Activated CD4-positive, alpha-beta memory T cell treated with anti-CD3 and anti-CD28 coated beads for 36 hours (primary cell): ENCODE measurements at regions of chr17 and their contacts with region 1.

Region 1: DNA sequence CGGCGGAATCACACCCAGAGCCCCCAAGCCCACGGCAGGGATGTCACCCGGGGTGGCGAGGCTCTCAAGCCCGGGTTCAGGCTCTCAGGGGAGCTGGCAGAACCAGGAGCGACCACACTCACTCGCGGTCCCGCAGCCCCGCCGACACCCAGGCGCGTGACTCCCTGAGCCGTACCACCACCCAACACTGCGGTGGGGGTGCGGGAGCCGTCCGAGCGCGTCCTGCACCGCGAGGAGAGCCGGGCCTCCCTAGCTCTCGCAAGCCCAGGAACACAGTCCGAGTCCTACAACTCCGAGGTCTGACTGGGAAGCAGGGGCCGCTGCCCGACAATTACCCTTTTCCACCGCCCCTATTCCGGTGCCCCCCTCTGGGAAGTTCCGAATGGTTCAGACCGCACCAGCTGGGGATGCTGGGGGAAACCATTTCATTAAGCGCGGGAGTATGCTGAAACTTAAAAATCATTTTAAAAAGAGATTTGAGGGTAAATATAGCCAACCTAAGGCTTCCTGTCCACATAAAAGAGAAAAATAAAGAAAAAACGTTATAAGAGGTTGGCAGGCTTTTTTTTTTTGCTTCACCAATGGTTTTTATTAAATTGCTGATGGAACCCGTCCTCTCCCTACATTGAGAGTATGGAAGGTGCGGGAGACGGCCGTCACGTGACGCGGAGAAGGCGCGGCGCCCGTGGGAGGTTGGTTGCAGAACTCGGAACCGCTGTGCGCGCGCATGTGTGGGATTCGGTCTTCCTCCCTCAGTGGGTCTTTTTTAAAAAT is at the start of gene FLCN:
- DNase-seq: peak; percentile 92
- H3K4me3 Mint-ChIP-seq: peak within 1 kb of the TSS; percentile 97
- H3K27ac Mint-ChIP-seq: peak within 1 kb of the TSS; percentile 94
- H3K4me1 Mint-ChIP-seq: peaks cover 36% of the 10 kb centered on the region
- H3K27me3 Mint-ChIP-seq: no peaks in the 10 kb centered on the region
- total RNA-seq, gene FLCN: 24.0 to 24.6 TPM

Region 2: DNA sequence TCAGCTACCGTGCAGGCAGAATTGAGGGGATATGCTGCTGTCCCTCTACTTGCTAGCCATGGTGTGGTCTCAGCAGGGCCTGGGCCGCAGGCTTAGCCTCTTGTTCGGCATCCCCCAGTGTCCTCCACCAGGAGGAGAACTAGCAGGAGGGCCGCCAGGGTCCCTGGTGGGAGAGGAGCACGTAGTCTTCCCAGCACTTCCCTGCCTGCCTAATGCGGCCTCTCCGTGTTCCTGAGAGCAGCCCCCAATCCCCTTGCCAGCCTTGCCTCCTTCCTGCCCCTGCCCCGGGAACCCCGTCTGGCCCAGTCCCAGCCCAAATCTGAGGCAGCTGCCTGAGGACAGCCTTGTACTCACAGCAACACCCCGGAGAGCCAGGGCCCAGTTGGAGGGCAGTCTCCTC is 69.2 kb before region 1 on chr17:
- CTCF ChIA-PET with region 1: no interaction called
- POLR2A ChIA-PET with region 1: no interaction called
- intact Hi-C with region 1: no loop called
- DNase-seq: no peak
- H3K4me3 Mint-ChIP-seq: no peak overlapping the region
- H3K27ac Mint-ChIP-seq: peak overlapping the region; percentile 2
- H3K4me1 Mint-ChIP-seq: peaks cover 44% of the 10 kb centered on the region
- H3K27me3 Mint-ChIP-seq: no peaks in the 10 kb centered on the region

Region 3: GRCh38 chr17:17179371-17179827 is 57.8 kb before region 1 on chr17:
- CTCF ChIA-PET with region 1: no interaction called
- POLR2A ChIA-PET with region 1: no interaction called
- intact Hi-C with region 1: loop called (anchors 1 kb)
- DNase-seq: peak; percentile 37
- H3K4me3 Mint-ChIP-seq: peak overlapping the region; percentile 63
- H3K27ac Mint-ChIP-seq: peak overlapping the region; percentile 95
- H3K4me1 Mint-ChIP-seq: peaks cover 83% of the 10 kb centered on the region
- H3K27me3 Mint-ChIP-seq: no peaks in the 10 kb centered on the region

Region 4: DNA sequence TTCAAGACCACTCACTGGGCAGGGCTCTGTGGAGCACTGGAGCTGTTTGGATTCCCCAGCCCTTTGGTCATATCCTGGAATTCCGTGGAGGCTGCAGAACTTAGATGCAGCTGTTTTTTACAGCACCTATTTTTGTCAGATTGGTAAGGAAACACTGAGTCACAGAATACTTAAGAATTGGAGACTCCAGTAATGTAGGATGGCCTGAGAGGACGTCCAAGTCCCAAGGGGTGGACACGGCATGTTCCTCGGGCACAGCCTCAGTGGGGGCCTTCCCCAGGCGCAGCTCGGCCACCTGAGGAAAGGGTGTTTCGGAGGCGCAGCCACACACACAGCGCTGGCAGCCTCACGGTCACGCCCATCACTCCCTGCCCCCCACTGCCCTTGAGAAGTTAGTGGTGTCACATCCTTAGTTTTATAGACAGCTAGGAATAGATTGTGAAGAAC is 45.8 kb before region 1 on chr17:
- CTCF ChIA-PET with region 1: no interaction called
- POLR2A ChIA-PET with region 1: no interaction called
- intact Hi-C with region 1: no loop called
- DNase-seq: no peak
- H3K4me3 Mint-ChIP-seq: no peak overlapping the region
- H3K27ac Mint-ChIP-seq: peak overlapping the region; percentile 25
- H3K4me1 Mint-ChIP-seq: peaks cover 6% of the 10 kb centered on the region
- H3K27me3 Mint-ChIP-seq: no peaks in the 10 kb centered on the region

Region 5: GRCh38 chr17:17280613-17281549 is 43.7 kb after region 1 on chr17 and contains the start of gene COPS3:
- CTCF ChIA-PET with region 1: no interaction called
- POLR2A ChIA-PET with region 1: interaction called, 5 read pairs
- intact Hi-C with region 1: loop called (anchors 2 kb)
- DNase-seq: peak; percentile 98
- H3K4me3 Mint-ChIP-seq: peak within 1 kb of the TSS; percentile 87
- H3K27ac Mint-ChIP-seq: peak within 1 kb of the TSS; percentile 83
- H3K4me1 Mint-ChIP-seq: peaks cover 31% of the 10 kb centered on the region
- H3K27me3 Mint-ChIP-seq: no peaks in the 10 kb centered on the region
- total RNA-seq, gene COPS3: 96.1 to 104 TPM